ENCODE measurements at regions of chr3 and their contacts with region 1.

Region 1: GRCh38 chr3:15098503-15099363 is at the start of gene RBSN:
- DNase-seq: peak; percentile 87 to 98 (median 94)
- ATAC-seq: peak; percentile 76
- H3K4me3 ChIP-seq: peak within 1 kb of the TSS; percentile 71 to 76
- H3K4me3 Mint-ChIP-seq: peak within 1 kb of the TSS; percentile 88
- H3K27ac ChIP-seq: peak within 1 kb of the TSS; percentile 96 to 98
- H3K27ac Mint-ChIP-seq: peak within 1 kb of the TSS; percentile 95
- H3K4me1 ChIP-seq: peaks cover 16% of the 10 kb centered on the region
- H3K4me1 Mint-ChIP-seq: peaks cover 31% of the 10 kb centered on the region
- H3K27me3 ChIP-seq: no peaks in the 10 kb centered on the region
- H3K27me3 Mint-ChIP-seq: no peaks in the 10 kb centered on the region
- CTCF ChIP-seq: no peak
- total RNA-seq, gene RBSN: 41.9 to 48.1 TPM

Region 2: DNA sequence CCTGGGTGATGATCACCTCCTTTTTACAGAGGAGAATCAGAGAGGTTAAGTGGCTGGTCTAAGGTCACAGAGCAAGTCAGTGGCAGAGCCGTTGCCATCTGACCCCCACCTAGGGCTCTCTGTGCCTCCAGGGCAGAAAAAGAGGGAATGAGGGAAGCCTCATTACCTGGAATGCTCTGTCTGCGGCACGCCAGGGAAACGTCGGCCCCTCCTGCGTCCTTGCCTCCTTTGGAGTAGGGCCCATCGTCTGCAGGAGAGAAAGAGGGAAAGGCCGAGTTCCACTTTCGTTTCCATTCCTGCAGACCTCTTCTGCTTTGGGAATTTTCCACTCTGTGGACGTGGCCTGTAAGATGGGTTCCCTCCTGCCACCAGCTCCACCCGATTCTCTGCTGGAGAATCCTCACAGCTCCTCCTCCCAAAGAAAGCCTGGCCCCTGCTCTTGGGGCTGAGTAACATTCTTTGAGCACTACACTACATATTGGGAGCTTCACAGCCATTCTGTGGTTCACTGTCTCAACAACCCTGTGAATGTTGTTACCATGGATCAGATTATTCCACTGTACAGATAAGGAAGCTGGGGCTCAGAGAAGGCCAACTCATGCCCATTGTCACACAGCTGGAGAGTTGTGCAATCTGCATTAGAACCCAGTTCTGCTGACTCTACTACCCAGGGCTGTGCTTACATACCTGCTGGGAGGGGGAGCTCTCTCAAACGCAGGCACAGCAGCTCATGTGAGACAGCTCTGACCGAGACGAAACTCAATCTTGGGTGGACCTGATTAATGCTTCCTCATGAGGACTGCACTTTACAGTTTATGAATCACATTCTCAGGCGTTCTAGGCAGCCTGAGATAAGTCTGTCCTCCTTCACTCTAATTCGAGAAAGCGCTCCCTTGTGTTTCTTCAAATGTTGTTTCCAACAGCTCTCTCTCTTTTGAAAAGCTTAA is 572.8 kb before region 1 on chr3:
- CTCF ChIA-PET with region 1: no interaction called
- POLR2A ChIA-PET with region 1: no interaction called
- intact Hi-C with region 1: no loop called
- DNase-seq: no peak
- ATAC-seq: no peak
- H3K4me3 ChIP-seq: no peak overlapping the region
- H3K4me3 Mint-ChIP-seq: no peak overlapping the region
- H3K27ac ChIP-seq: no peak overlapping the region
- H3K27ac Mint-ChIP-seq: no peak overlapping the region
- H3K4me1 ChIP-seq: no peaks in the 10 kb centered on the region
- H3K4me1 Mint-ChIP-seq: no peaks in the 10 kb centered on the region
- H3K27me3 ChIP-seq: peaks cover 0 to 5% of the 10 kb centered on the region in 2 experiments
- H3K27me3 Mint-ChIP-seq: peaks cover 17% of the 10 kb centered on the region
- CTCF ChIP-seq: no peak

Region 3: DNA sequence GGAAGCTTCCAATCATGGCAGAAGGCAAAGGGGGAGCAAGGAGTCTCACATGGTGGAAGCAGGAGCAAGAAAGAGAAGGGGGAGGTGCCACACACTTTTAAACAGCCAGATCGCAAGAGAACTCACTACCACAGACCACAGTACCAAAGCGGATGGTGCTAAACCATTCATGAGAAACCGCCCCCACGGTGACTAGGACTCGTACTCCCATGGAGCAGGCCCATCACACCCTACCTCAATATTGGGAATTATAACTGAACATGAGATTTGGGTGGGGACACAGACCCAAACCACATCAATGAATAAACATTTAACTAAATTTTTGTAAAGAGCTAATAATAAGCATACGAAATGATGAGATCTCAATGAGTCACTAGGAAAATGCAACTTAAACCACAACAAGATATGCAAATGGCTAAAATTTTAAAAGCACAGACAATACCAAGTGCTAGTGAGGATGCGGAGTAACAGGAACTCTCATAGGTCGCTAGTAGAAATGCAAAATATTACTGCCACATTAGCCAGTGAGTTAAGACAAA is 43.6 kb before region 1 on chr3:
- CTCF ChIA-PET with region 1: no interaction called
- POLR2A ChIA-PET with region 1: no interaction called
- intact Hi-C with region 1: loop called in 1 of 2 experiments (anchors 2 kb)
- DNase-seq: peak in 7 of 9 experiments; percentile 21 to 75 (median 50)
- ATAC-seq: peak; percentile 72
- H3K4me3 ChIP-seq: no peak overlapping the region
- H3K4me3 Mint-ChIP-seq: no peak overlapping the region
- H3K27ac ChIP-seq: peak overlapping the region in 1 of 2 experiments; percentile 28
- H3K27ac Mint-ChIP-seq: peak overlapping the region; percentile 58
- H3K4me1 ChIP-seq: no peaks in the 10 kb centered on the region
- H3K4me1 Mint-ChIP-seq: peaks cover 33% of the 10 kb centered on the region
- H3K27me3 ChIP-seq: no peaks in the 10 kb centered on the region
- H3K27me3 Mint-ChIP-seq: no peaks in the 10 kb centered on the region
- CTCF ChIP-seq: no peak

Region 4: DNA sequence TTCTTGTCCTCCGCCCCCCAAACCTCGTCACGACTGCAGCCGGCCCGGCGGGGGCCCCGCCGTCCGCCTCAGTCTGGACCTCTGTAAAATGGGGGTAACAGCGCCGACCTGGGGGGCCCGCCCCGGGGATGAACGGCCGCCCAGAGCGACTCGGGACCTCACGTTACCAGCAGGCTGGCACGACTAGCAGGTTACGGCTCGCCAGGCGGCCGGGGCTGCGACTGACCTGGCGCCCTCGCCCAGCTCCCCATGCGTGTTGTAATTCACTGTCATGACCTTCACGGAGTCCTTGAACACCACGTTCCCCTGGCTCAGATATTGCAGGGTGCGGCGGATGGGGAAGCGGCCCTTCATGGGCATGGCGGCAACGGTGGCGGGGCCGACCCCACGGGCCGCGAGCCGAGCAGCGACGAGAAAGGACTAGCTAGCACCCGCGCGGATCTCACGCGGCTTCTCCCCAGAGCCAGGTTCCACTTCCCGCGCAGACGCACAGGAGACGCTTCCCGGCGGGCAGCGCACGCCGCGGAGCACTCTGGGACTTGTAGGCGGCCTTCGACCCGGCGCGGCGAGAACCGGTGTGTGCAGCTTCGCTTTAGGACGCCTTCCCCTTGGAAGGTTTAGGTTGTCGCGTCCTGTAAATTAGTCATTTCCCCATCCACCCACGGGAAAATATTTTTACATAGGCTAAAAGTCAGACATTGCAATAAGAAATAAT is 33.7 kb before region 1 on chr3 and contains the start of gene MRPS25:
- CTCF ChIA-PET with region 1: no interaction called
- POLR2A ChIA-PET with region 1: interaction called, 8 read pairs
- intact Hi-C with region 1: loop called (anchors 1 kb)
- DNase-seq: peak; percentile 75 to 94 (median 89)
- ATAC-seq: peak; percentile 98
- H3K4me3 ChIP-seq: peak within 1 kb of the TSS; percentile 89 to 96
- H3K4me3 Mint-ChIP-seq: peak within 1 kb of the TSS; percentile 98
- H3K27ac ChIP-seq: peak within 1 kb of the TSS; percentile 78 to 85
- H3K27ac Mint-ChIP-seq: peak within 1 kb of the TSS; percentile 97
- H3K4me1 ChIP-seq: peaks cover 17% of the 10 kb centered on the region
- H3K4me1 Mint-ChIP-seq: peaks cover 26% of the 10 kb centered on the region
- H3K27me3 ChIP-seq: no peaks in the 10 kb centered on the region
- H3K27me3 Mint-ChIP-seq: no peaks in the 10 kb centered on the region
- CTCF ChIP-seq: no peak
- total RNA-seq, gene MRPS25: 51.3 to 56.2 TPM

Region 5: GRCh38 chr3:15601397-15602145 is 502.8 kb after region 1 on chr3 and contains the starts of genes BTD and HACL1:
- CTCF ChIA-PET with region 1: no interaction called
- POLR2A ChIA-PET with region 1: no interaction called
- intact Hi-C with region 1: loop called in 1 of 2 experiments (anchors 5 kb)
- DNase-seq: peak; percentile 96 to 100 (median 99)
- ATAC-seq: peak; percentile 89
- H3K4me3 ChIP-seq: peak within 1 kb of the TSS; percentile 82 to 94
- H3K4me3 Mint-ChIP-seq: peak within 1 kb of the TSS; percentile 100
- H3K27ac ChIP-seq: peak within 1 kb of the TSS; percentile 82 to 88
- H3K27ac Mint-ChIP-seq: peak within 1 kb of the TSS; percentile 99
- H3K4me1 ChIP-seq: peaks cover 19% of the 10 kb centered on the region
- H3K4me1 Mint-ChIP-seq: peaks cover 54% of the 10 kb centered on the region
- H3K27me3 ChIP-seq: no peaks in the 10 kb centered on the region
- H3K27me3 Mint-ChIP-seq: no peaks in the 10 kb centered on the region
- CTCF ChIP-seq: peak; percentile 24
- total RNA-seq, gene BTD: 9.1 to 11.3 TPM
- total RNA-seq, gene HACL1: 30.1 to 33.4 TPM

Region 6: GRCh38 chr3:15859507-15860013 is 760.8 kb after region 1 on chr3:
- CTCF ChIA-PET with region 1: no interaction called
- POLR2A ChIA-PET with region 1: no interaction called
- intact Hi-C with region 1: loop called (anchors 2 to 10 kb)
- DNase-seq: peak; percentile 42 to 88 (median 73)
- ATAC-seq: peak; percentile 78
- H3K4me3 ChIP-seq: peak overlapping the region; percentile 73 to 86
- H3K4me3 Mint-ChIP-seq: peak overlapping the region; percentile 97
- H3K27ac ChIP-seq: peak overlapping the region in 1 of 2 experiments; percentile 46
- H3K27ac Mint-ChIP-seq: peak overlapping the region; percentile 95
- H3K4me1 ChIP-seq: peaks cover 20% of the 10 kb centered on the region
- H3K4me1 Mint-ChIP-seq: peaks cover 35% of the 10 kb centered on the region
- H3K27me3 ChIP-seq: no peaks in the 10 kb centered on the region
- H3K27me3 Mint-ChIP-seq: no peaks in the 10 kb centered on the region
- CTCF ChIP-seq: no peak

Measured in CD8-positive, alpha-beta T cell (primary cell).